ENCODE measurements at regions of chr7 and their contacts with region 1.

Region 1: DNA sequence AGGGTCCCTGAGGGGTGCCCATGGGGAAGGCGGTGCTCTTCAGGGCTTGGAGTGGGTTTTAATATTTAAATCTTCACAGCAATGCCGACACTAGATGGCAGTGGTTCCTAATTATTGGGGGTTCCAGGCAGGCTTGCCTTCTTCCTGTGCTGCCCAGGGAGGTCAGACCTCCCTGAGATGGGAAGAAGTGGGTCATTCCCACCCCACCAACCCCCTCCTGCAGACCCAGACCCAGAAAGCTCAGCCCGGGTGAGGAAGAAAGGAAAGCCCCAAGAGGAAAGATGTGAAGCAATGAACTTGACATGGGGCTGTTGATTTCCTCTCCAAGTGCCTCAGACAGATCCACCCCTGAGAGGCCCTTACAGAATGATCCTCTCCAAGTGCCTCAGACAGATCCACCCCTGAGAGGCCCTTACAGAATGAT is 85.1 kb upstream of the LANCL2 start:
- DNase-seq: peak; percentile 30
- H3K4me3 ChIP-seq: no peak overlapping the region
- H3K27ac ChIP-seq: no peak overlapping the region
- H3K27me3 ChIP-seq: peaks cover 22% of the 10 kb centered on the region
- CTCF ChIP-seq: peak; percentile 74

Region 2: DNA sequence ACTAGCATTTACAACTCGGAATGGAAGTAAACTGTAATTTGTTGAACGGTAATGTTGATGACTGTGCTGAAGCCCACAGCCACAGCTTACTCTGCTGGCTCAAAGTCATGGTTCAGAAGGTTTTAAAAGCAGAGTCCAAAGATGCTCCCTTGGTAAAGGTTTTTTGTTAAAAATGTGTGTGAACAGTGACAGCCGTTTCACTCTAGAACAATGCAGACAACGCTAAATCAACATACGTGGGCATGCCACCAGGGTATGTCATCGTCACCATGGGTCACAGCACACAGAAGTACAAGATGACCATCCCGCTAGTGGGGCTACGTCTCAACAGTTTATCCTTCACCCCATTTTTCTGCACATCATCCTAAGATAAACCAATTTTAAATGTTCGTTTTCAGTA is 21.4 kb before region 1 on chr7:
- CTCF ChIA-PET with region 1: no interaction called
- POLR2A ChIA-PET with region 1: no interaction called
- DNase-seq: no peak
- H3K4me3 ChIP-seq: no peak overlapping the region
- H3K27ac ChIP-seq: no peak overlapping the region
- H3K27me3 ChIP-seq: peaks cover 7% of the 10 kb centered on the region
- CTCF ChIP-seq: no peak

Region 3: GRCh38 chr7:55309040-55309991 is 29.3 kb after region 1 on chr7:
- CTCF ChIA-PET with region 1: interaction called, 11 read pairs
- POLR2A ChIA-PET with region 1: no interaction called
- DNase-seq: no peak
- H3K4me3 ChIP-seq: no peak overlapping the region
- H3K27ac ChIP-seq: no peak overlapping the region
- H3K27me3 ChIP-seq: peaks cover 4% of the 10 kb centered on the region
- CTCF ChIP-seq: no peak

Region 4: GRCh38 chr7:55400191-55400590 is 120.1 kb after region 1 on chr7:
- CTCF ChIA-PET with region 1: interaction called, 12 read pairs
- POLR2A ChIA-PET with region 1: no interaction called
- DNase-seq: no peak
- H3K4me3 ChIP-seq: no peak overlapping the region
- H3K27ac ChIP-seq: no peak overlapping the region
- H3K27me3 ChIP-seq: no peaks in the 10 kb centered on the region
- CTCF ChIP-seq: no peak

Region 5: GRCh38 chr7:55409482-55410225 is 129.6 kb after region 1 on chr7:
- CTCF ChIA-PET with region 1: interaction called, 204 read pairs
- POLR2A ChIA-PET with region 1: no interaction called
- DNase-seq: no peak
- H3K4me3 ChIP-seq: no peak overlapping the region
- H3K27ac ChIP-seq: no peak overlapping the region
- H3K27me3 ChIP-seq: no peaks in the 10 kb centered on the region
- CTCF ChIP-seq: peak; percentile 22; the same call in 1 of the 2 replicates

Region 6: GRCh38 chr7:55423277-55423711 is 143.3 kb after region 1 on chr7:
- CTCF ChIA-PET with region 1: interaction called, 20 read pairs
- POLR2A ChIA-PET with region 1: no interaction called
- DNase-seq: no peak
- H3K4me3 ChIP-seq: no peak overlapping the region
- H3K27ac ChIP-seq: no peak overlapping the region
- H3K27me3 ChIP-seq: no peaks in the 10 kb centered on the region
- CTCF ChIP-seq: peak; percentile 55